Posterior cingulate gyrus (tissue), 11 donors: ENCODE measurements at regions of chr7 and their contacts with region 1.

Region 1: GRCh38 chr7:138738551-138739335 is 37.6 kb upstream of the SVOPL start:
- DNase-seq: peak; percentile 62 to 98 (median 89)

Region 2: GRCh38 chr7:138161600-138162081 is 577.1 kb before region 1 on chr7:
- intact Hi-C with region 1: loop called (anchors 1 kb)
- DNase-seq: peak; percentile 48 to 95 (median 78)

Region 3: DNA sequence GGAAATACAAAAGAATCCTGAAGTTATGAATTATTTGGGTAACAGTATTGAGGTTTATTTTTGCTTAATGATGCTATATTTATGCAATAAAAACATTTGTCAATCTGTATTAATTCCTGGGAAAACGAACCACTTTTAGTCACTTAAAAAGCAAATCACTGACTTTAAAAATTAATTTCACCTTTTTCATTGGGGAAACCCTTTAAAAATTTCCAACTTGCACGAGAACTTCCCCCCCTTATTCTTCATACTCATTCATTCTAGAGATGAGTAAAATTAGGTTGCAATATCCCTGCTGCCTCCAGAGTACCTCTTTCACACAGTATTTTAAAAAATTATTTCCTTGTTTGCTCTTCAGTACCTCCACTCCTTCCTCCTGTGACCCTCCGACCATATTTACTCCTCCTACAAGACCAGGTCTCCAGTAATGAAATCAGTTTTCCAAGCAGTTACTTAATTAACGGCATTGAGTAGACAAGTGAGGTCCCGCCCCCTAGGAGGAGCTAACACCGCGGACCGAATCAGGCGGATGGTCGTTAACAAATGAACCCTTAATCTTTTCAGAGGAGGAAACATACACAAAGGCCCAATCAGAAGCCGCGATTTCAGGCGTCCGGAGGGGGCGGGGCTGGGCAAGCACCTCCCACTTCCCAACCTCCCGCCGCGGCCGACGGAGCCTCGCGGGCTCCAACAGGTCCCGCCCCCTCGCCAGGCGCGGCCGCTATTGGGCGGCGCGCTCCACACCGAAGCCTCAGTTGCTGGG is 279.1 kb before region 1 on chr7:
- intact Hi-C with region 1: loop called (anchors 5 kb)
- DNase-seq: peak; percentile 98 to 100 (median 98)